Heart left ventricle (tissue), 16 donors: ENCODE measurements at regions of chr4 and their contacts with region 1.

Region 1: DNA sequence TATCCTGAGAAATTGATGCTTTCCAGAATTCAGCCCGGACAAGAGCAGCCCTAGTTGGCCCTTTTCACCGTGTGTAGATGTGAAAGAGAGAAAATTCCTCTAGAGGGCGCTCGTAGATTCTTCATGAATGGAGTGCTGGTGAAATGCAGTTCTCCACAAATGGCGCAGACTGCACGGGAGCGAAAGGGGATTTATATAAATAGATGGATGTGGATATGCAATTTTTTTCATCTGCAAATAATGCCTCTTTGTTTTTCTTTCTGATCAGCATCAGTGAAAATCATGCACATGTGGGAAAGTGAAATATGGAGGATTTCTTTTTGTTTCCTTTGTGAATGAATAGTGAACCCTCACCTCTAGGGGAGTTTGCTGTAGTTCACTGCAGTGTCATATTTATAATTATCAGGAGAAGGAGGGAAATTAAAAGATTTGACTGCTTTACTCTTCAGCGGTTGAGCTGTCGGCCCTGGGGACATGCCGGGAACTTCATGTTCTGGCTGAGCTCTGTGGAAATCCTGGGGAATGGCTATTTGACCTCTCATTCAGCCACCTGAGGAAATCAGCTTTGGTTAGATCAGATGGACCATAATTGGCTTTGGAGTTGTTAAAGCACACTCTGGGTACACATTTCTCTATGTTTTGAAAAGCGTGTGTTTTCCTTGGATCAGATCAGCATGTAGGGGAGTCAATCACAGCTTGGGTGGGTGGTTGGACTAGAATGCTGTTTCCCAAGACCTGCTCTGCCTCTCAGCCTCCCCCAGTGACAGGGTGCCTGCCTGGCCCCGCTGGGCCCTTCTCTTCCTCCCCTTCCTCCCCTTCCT is 115.0 kb upstream of the SHISA3 start:
- DNase-seq: peak in 3 of 5 donors; percentile 39 to 49 (median 42)
- ATAC-seq: peak; percentile 62 to 95 (median 90)
- H3K4me3 ChIP-seq: peak overlapping the region in 3 of 12 donors; percentile 8 to 28 (median 8)
- H3K27ac ChIP-seq: peak overlapping the region in 1 of 12 donors; percentile 49
- H3K4me1 ChIP-seq: peaks cover 0 to 11% (median 0%) of the 10 kb centered on the region in 12 donors
- H3K27me3 ChIP-seq: peaks cover 0 to 3% (median 0%) of the 10 kb centered on the region in 9 donors
- CTCF ChIP-seq: peak; percentile 66 to 83 (median 80)
- POLR2A ChIP-seq: no peak

Region 2: GRCh38 chr4:41957634-41958033 is 324.7 kb before region 1 on chr4:
- intact Hi-C with region 1: loop called in 3 of 10 experiments (anchors 5 to 10 kb)
- DNase-seq: no peak
- ATAC-seq: no peak
- H3K4me3 ChIP-seq: no peak overlapping the region
- H3K27ac ChIP-seq: no peak overlapping the region
- H3K4me1 ChIP-seq: no peaks in the 10 kb centered on the region
- H3K27me3 ChIP-seq: no peaks in the 10 kb centered on the region
- CTCF ChIP-seq: peak; percentile 14 to 55 (median 34)
- POLR2A ChIP-seq: no peak

Region 3: GRCh38 chr4:42359711-42360110 is 77.4 kb after region 1 on chr4:
- intact Hi-C with region 1: loop called in 3 of 10 experiments (anchors 10 kb)
- DNase-seq: no peak
- ATAC-seq: no peak
- H3K4me3 ChIP-seq: peak overlapping the region in 9 of 12 donors; percentile 1 to 44 (median 17)
- H3K27ac ChIP-seq: peak overlapping the region in 2 of 12 donors; percentile 49 to 50
- H3K4me1 ChIP-seq: peaks cover 0 to 8% (median 0%) of the 10 kb centered on the region in 12 donors
- H3K27me3 ChIP-seq: no peaks in the 10 kb centered on the region
- CTCF ChIP-seq: no peak
- POLR2A ChIP-seq: no peak

Region 4: GRCh38 chr4:42371306-42372252 is 89.3 kb after region 1 on chr4:
- intact Hi-C with region 1: loop called in 4 of 10 experiments (anchors 5 to 10 kb)
- DNase-seq: no peak
- ATAC-seq: peak in 3 of 4 donors; percentile 53 to 58 (median 56)
- H3K4me3 ChIP-seq: no peak overlapping the region
- H3K27ac ChIP-seq: no peak overlapping the region
- H3K4me1 ChIP-seq: no peaks in the 10 kb centered on the region
- H3K27me3 ChIP-seq: no peaks in the 10 kb centered on the region
- CTCF ChIP-seq: peak; percentile 32 to 73 (median 58)
- POLR2A ChIP-seq: no peak

Region 5: GRCh38 chr4:42396752-42397634 is 114.7 kb after region 1 on chr4 and contains the start of gene SHISA3:
- intact Hi-C with region 1: loop called in 2 of 10 experiments (anchors 10 kb)
- DNase-seq: peak in 2 of 5 donors; percentile 45 to 66
- ATAC-seq: peak; percentile 17 to 66 (median 54)
- H3K4me3 ChIP-seq: peak within 1 kb of the TSS; percentile 46 to 73 (median 62)
- H3K27ac ChIP-seq: peak within 1 kb of the TSS in 7 of 12 donors; percentile 35 to 66 (median 60)
- H3K4me1 ChIP-seq: peaks cover 0 to 34% (median 12%) of the 10 kb centered on the region in 12 donors
- H3K27me3 ChIP-seq: peaks cover 0 to 76% (median 15%) of the 10 kb centered on the region in 9 donors
- CTCF ChIP-seq: no peak
- POLR2A ChIP-seq: no peak
- total RNA-seq, gene SHISA3: 1.2 to 16.4 (median 1.8) TPM

Region 6: GRCh38 chr4:42519803-42520417 is 237.6 kb after region 1 on chr4:
- intact Hi-C with region 1: loop called (anchors 1 to 5 kb)
- DNase-seq: peak in 1 of 5 donors; percentile 23
- ATAC-seq: peak in 3 of 4 donors; percentile 33 to 62 (median 59)
- H3K4me3 ChIP-seq: no peak overlapping the region
- H3K27ac ChIP-seq: no peak overlapping the region
- H3K4me1 ChIP-seq: peaks cover 0 to 23% (median 7%) of the 10 kb centered on the region in 12 donors
- H3K27me3 ChIP-seq: no peaks in the 10 kb centered on the region
- CTCF ChIP-seq: peak; percentile 57 to 79 (median 69)
- POLR2A ChIP-seq: no peak

Region 7: GRCh38 chr4:42865572-42866189 is 583.4 kb after region 1 on chr4:
- intact Hi-C with region 1: loop called in 1 of 10 experiments (anchors 10 kb)
- DNase-seq: peak in 3 of 5 donors; percentile 16 to 28 (median 24)
- ATAC-seq: no peak
- H3K4me3 ChIP-seq: no peak overlapping the region
- H3K27ac ChIP-seq: no peak overlapping the region
- H3K4me1 ChIP-seq: no peaks in the 10 kb centered on the region
- H3K27me3 ChIP-seq: peaks cover 0 to 4% (median 0%) of the 10 kb centered on the region in 9 donors
- CTCF ChIP-seq: peak; percentile 61 to 81 (median 70)
- POLR2A ChIP-seq: no peak